ENCODE measurements at regions of chr17 and their contacts with region 1.

Region 1: DNA sequence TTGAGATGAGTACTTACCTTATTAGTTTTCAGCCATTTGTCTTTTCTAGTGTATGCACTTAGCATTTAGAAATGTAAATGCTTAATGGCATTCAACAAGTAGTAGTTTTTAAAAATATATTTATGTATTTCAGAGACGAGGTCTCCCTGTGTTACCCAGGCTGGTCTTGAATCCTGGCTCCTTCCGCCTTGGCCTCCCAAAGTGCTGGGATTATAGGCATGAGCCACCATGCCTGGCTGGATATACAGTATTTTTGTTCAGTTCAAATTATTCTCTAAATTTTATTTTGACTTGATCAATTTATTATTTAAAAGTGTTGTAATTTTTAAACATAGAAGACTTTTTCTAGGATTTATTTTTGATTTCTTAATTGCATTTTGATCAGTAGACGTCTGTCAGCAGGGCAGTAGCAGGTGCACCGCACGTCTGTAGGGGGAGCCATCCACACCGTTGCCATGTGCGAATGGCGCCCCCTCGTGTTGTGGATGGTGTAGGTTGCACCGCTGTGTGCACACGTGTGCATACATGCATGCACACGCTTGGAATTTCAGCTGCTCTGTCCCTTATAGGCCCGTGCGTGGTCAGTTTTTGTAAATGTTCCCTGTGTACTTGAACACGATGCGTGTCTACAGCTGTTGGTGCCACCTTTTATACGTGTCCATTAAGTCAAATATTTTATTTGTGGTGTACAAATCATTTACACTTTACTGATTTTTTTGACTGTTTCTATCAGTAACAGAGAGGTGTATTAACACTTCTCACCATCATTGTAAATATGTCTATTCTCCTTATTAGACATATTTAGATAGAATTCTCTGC is 30.6 kb downstream of the RPTOR start:
- DNase-seq: peak; percentile 90
- H3K4me3 ChIP-seq: no peak overlapping the region
- H3K27ac ChIP-seq: no peak overlapping the region
- H3K4me1 ChIP-seq: peaks cover 0 to 13% (median 0%) of the 10 kb centered on the region in 4 donors
- H3K27me3 ChIP-seq: no peaks in the 10 kb centered on the region
- CTCF ChIP-seq: peak; percentile 98 to 100 (median 100)
- EP300 ChIP-seq: no peak
- POLR2A ChIP-seq: no peak

Region 2: GRCh38 chr17:80970044-80970761 is 394.9 kb after region 1 on chr17:
- intact Hi-C with region 1: loop called (anchors 5 kb)
- DNase-seq: peak; percentile 88
- H3K4me3 ChIP-seq: no peak overlapping the region
- H3K27ac ChIP-seq: peak overlapping the region in 3 of 4 donors; percentile 66 to 82 (median 73)
- H3K4me1 ChIP-seq: peaks cover 0 to 37% (median 34%) of the 10 kb centered on the region in 4 donors
- H3K27me3 ChIP-seq: no peaks in the 10 kb centered on the region
- CTCF ChIP-seq: peak; percentile 66 to 71 (median 69)
- EP300 ChIP-seq: no peak
- POLR2A ChIP-seq: no peak